ENCODE measurements at regions of chr14 and their contacts with region 1.

Region 1: DNA sequence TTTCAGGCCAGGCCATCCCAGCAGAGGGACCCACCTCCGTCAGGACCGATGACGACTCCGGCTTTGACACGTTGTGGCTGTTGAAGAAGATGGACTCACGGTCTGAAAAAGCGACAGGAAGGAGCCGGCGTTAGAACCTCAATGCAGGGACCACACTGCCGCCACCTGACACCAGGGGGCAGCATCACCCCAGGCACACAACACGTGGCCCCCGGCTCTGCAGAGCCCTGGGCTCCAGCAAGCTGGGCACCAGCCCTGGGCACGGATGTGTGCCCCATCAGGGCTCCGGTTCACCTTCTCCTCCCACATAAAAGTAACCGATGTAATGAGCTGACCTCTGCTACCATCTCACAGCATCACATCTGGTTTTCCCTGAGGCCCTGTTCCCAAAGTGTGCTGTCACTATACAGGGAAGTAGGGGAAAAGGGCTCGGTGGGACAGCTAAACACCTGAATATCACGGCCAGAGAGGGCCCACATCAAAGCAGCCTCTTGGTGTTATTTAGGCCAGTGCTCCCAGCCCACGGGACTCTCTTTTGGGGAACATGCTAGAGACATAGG is 29.0 kb downstream of the CHGA start:
- DNase-seq: peak; percentile 82
- H3K4me3 ChIP-seq: no peak overlapping the region
- H3K27ac ChIP-seq: no peak overlapping the region
- H3K4me1 ChIP-seq: no peaks in the 10 kb centered on the region
- H3K27me3 ChIP-seq: no peaks in the 10 kb centered on the region
- CTCF ChIP-seq: peak; percentile 96

Region 2: GRCh38 chr14:93112891-93113677 is 161.1 kb after region 1 on chr14:
- intact Hi-C with region 1: loop called (anchors 2 kb)
- DNase-seq: peak; percentile 91
- H3K4me3 ChIP-seq: peak overlapping the region; percentile 93
- H3K27ac ChIP-seq: peak overlapping the region; percentile 70
- H3K4me1 ChIP-seq: peaks cover 12% of the 10 kb centered on the region
- H3K27me3 ChIP-seq: no peaks in the 10 kb centered on the region
- CTCF ChIP-seq: peak; percentile 84

Region 3: DNA sequence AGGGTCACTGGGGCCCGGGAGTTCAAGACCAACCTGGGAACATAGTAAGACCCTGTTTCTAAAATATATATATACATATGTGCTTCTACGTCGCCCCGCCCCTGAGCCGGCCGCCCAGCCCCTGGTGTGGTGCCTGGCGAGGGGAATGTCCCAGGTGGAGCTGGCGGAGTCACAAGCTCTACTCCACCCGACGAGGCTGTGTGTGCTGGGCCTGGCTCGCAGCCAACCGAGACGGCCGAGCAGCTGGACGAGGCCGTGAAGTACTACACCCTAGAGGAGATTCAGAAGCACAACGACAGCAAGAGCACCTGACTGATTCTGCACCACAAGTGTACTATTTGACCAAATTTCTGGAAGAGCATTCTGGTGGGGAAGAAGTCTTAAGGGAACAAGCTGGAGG is 185.9 kb after region 1 on chr14:
- intact Hi-C with region 1: loop called (anchors 1 kb)
- DNase-seq: peak; percentile 86
- H3K4me3 ChIP-seq: no peak overlapping the region
- H3K27ac ChIP-seq: no peak overlapping the region
- H3K4me1 ChIP-seq: no peaks in the 10 kb centered on the region
- H3K27me3 ChIP-seq: no peaks in the 10 kb centered on the region
- CTCF ChIP-seq: peak; percentile 22